CD8-positive, alpha-beta memory T cell (primary cell): ENCODE measurements at regions of chr13 and their contacts with region 1.

Region 1: GRCh38 chr13:29508130-29508875 is 87.2 kb downstream of the SLC7A1 start:
- DNase-seq: peak; percentile 51 to 81 (median 61)
- H3K4me3 ChIP-seq: no peak overlapping the region
- H3K4me3 Mint-ChIP-seq: no peak overlapping the region
- H3K27ac ChIP-seq: no peak overlapping the region
- H3K27ac Mint-ChIP-seq: peak overlapping the region in 1 of 8 donors; percentile 19
- H3K4me1 ChIP-seq: no peaks in the 10 kb centered on the region
- H3K4me1 Mint-ChIP-seq: no peaks in the 10 kb centered on the region
- H3K27me3 ChIP-seq: no peaks in the 10 kb centered on the region
- H3K27me3 Mint-ChIP-seq: peaks cover 6 to 21% of the 10 kb centered on the region in 2 donors

Region 2: DNA sequence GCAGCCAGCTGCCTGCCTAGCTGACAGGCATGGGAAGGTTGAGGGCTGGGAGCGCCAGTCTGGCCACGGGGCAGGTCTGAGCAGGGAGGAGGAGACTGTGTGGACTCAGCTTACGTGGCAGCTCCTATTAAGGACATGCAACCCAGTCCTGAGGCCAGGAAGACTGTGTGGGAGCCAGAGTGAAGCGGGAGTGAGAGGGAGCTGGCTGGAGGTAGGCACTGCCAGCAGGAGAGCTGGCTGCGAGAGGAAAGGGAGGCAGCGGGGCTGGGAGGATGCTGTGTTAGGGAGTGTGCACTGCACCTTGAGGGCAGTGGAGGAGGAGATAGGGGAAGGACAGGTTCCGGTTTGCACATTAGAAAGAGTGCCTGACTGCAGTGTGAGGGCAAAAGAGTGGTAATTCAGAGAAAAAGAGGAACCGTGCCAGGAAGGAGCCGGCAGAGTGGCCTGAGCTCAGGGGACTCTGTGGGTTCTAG is 12.0 kb before region 1 on chr13:
- CTCF ChIA-PET with region 1: interaction called, 25 read pairs
- POLR2A ChIA-PET with region 1: no interaction called
- DNase-seq: no peak
- H3K4me3 ChIP-seq: no peak overlapping the region
- H3K4me3 Mint-ChIP-seq: no peak overlapping the region
- H3K27ac ChIP-seq: no peak overlapping the region
- H3K27ac Mint-ChIP-seq: no peak overlapping the region
- H3K4me1 ChIP-seq: no peaks in the 10 kb centered on the region
- H3K4me1 Mint-ChIP-seq: peaks cover 0 to 5% (median 4%) of the 10 kb centered on the region in 3 donors
- H3K27me3 ChIP-seq: no peaks in the 10 kb centered on the region
- H3K27me3 Mint-ChIP-seq: peaks cover 25 to 36% of the 10 kb centered on the region in 2 donors

Region 3: DNA sequence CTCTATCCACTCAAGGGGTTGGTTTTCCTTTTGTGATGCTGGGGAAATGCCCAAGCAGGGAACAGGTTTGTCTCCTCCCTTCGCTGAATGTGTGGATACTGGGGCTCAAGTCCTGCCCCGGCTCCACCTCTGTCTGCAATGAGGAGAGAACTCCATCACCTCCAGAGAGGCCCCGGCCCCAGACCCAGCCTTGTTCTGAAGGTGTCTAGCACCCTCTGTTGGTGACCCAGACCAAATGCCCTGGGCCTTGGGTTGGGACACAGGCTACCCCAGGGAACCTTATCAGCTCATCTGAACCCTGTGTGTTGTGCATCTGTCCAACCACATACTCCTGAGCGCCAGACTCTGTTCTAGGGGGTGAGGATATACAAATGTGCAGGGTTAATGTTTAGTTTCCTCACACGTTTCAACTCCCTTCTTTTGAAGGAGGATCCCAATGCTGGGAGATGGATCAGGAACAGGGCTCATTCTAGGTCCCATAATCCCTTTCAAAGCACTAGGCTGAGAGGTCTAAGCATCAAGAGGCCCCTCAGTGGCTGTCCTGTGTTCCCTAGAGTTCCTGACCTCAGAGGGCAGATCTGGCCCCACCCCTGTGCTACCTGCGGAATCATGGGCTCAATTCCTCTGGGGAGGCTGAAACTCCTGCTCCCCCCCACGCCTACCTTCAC is 199.7 kb after region 1 on chr13:
- CTCF ChIA-PET with region 1: interaction called, 21 read pairs
- POLR2A ChIA-PET with region 1: no interaction called
- DNase-seq: peak; percentile 8 to 60 (median 22)
- H3K4me3 ChIP-seq: no peak overlapping the region
- H3K4me3 Mint-ChIP-seq: no peak overlapping the region
- H3K27ac ChIP-seq: no peak overlapping the region
- H3K27ac Mint-ChIP-seq: peak overlapping the region in 1 of 8 donors; percentile 8
- H3K4me1 ChIP-seq: no peaks in the 10 kb centered on the region
- H3K4me1 Mint-ChIP-seq: no peaks in the 10 kb centered on the region
- H3K27me3 ChIP-seq: no peaks in the 10 kb centered on the region
- H3K27me3 Mint-ChIP-seq: peaks cover 4 to 27% of the 10 kb centered on the region in 2 donors

Region 4: DNA sequence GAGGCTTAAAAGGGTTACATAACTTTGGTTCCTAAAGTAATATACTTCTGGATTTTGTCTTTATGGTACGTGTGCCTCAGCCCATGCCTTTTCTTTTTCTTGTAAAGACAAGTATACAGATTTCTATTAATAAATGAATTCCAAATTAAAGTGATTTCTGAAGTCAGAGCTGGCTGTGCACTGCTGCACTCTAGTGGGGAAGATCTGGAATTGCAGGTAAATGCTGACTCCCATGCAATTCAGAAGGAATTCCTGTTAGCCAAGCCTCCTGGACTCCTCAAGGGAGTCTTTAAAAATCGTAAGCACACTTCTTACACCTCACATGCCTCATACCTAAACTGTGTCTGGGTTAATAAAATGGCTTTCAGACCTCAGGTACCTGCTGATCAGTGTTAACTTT is 205.5 kb after region 1 on chr13:
- CTCF ChIA-PET with region 1: interaction called, 16 read pairs
- POLR2A ChIA-PET with region 1: no interaction called
- DNase-seq: no peak
- H3K4me3 ChIP-seq: no peak overlapping the region
- H3K4me3 Mint-ChIP-seq: no peak overlapping the region
- H3K27ac ChIP-seq: no peak overlapping the region
- H3K27ac Mint-ChIP-seq: no peak overlapping the region
- H3K4me1 ChIP-seq: no peaks in the 10 kb centered on the region
- H3K4me1 Mint-ChIP-seq: no peaks in the 10 kb centered on the region
- H3K27me3 ChIP-seq: no peaks in the 10 kb centered on the region
- H3K27me3 Mint-ChIP-seq: peaks cover 9 to 50% of the 10 kb centered on the region in 2 donors